GM13976 (cell line): ENCODE measurements at regions of chr1 and their contacts with region 1.

Region 1: GRCh38 chr1:65959896-65960567 is 167.3 kb downstream of the PDE4B start:
- DNase-seq: no peak
- CTCF ChIP-seq: no peak

Region 2: GRCh38 chr1:66452162-66452561 is 492.1 kb after region 1 on chr1:
- in situ Hi-C with region 1: loop called (anchors 10 kb)
- DNase-seq: no peak
- CTCF ChIP-seq: no peak